Esophagus muscularis mucosa (tissue), 4 donors: ENCODE measurements at regions of chr1 and their contacts with region 1.

Region 1: DNA sequence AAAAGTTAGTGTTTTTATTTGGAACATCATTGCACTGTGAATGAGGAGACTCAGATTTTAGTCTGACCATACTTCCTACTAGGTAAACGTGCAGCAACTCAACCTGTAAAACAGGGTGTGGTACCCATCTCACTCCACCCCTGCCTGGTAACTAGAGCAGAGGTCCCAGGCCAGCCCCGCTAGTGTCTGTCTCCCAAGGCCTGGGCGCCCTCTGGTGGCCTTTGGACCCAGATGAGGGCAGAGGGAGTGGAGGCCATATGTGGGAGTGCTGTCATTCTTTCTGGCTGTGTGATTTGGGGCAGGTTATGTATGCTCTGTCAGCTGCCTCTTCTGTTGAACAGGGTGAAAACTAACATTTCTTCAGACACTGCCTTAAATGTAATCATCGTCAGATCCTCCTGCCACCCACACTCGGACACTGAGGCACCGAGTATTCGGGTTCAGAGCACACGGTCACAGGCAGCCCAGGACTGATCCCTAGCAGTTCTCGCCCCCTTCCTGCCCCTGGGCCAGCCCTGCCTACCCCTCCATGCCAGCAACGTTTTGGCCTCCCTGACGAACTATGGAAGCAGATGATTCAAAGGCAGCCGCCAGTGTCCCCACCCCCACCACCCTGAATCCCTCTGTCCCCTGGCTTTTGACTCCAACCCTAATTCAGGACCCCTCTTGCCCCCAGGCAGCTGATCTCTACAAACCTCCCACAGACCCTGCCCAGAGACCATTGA is 76.0 kb downstream of the CD247 start:
- DNase-seq: no peak
- H3K4me3 ChIP-seq: no peak overlapping the region
- H3K27ac ChIP-seq: no peak overlapping the region
- H3K4me1 ChIP-seq: peaks cover 7 to 13% (median 10%) of the 10 kb centered on the region in 4 donors
- H3K27me3 ChIP-seq: peaks cover 0 to 24% (median 4%) of the 10 kb centered on the region in 4 donors
- CTCF ChIP-seq: peak; percentile 79 to 91 (median 79)
- EP300 ChIP-seq: no peak
- POLR2A ChIP-seq: no peak

Region 2: DNA sequence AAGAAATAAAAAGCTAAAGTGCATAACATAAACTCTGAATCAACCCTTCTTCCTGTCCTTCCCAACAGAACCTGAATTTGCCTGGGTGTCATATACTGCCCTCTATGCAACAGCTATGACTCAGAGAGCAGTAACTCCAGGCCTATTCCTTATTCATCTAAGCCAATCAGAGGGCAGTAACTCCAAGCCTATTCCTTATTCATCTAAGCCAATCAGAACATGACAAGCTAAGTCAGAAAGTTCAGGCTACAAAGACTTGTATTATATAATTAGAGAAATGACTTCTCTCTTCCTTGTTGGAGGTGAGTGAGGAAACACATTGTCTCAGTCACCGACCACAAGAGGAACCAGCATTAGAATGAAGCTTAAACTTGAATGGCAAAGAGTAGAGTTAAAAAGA is 540.0 kb before region 1 on chr1:
- intact Hi-C with region 1: loop called (anchors 10 kb)
- DNase-seq: no peak
- H3K4me3 ChIP-seq: no peak overlapping the region
- H3K27ac ChIP-seq: no peak overlapping the region
- H3K4me1 ChIP-seq: peaks cover 0 to 8% (median 2%) of the 10 kb centered on the region in 4 donors
- H3K27me3 ChIP-seq: no peaks in the 10 kb centered on the region
- CTCF ChIP-seq: no peak
- EP300 ChIP-seq: no peak
- POLR2A ChIP-seq: no peak

Region 3: DNA sequence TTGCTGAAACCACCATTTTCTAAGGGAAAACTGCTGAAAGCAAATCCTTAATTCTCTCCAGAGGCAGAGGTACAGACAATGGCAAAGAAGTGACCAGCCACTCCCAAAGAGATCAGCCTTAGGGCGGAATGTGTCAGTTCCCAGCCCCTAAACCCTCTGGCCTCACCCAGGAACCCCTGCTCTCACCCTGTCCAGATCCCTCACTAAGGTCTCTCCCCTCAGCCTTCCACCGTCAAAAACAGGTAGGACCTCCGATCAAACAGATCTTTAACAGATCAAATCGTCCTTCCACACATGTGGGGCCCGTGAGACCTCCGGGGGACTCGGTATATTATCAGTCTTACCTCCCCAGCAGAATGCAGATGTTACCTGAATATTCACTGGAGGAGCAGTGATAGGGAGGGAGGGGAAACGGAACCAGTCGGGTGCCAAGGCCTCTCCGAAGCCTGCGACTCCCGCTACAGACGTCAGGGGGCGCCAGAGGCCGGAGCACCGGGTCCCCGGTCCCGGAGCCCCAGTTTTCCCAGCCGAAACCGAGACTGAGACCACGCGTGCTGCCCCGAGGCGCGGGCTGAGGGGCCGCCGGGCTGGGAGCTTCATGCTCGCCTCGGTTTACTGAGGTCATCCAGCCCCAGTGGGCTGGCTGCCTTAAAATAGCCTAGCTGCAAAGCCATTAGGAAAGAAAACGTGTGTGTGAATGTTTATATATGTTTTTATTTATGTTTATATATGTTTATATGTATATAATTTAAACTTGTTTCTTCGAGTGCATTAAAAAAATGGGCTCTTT is 375.8 kb before region 1 on chr1:
- intact Hi-C with region 1: loop called (anchors 2 kb)
- DNase-seq: no peak
- H3K4me3 ChIP-seq: peak overlapping the region; percentile 33 to 51 (median 36)
- H3K27ac ChIP-seq: no peak overlapping the region
- H3K4me1 ChIP-seq: peaks cover 6 to 8% (median 7%) of the 10 kb centered on the region in 4 donors
- H3K27me3 ChIP-seq: no peaks in the 10 kb centered on the region
- CTCF ChIP-seq: peak; percentile 89 to 100 (median 92)
- EP300 ChIP-seq: no peak
- POLR2A ChIP-seq: no peak

Region 4: DNA sequence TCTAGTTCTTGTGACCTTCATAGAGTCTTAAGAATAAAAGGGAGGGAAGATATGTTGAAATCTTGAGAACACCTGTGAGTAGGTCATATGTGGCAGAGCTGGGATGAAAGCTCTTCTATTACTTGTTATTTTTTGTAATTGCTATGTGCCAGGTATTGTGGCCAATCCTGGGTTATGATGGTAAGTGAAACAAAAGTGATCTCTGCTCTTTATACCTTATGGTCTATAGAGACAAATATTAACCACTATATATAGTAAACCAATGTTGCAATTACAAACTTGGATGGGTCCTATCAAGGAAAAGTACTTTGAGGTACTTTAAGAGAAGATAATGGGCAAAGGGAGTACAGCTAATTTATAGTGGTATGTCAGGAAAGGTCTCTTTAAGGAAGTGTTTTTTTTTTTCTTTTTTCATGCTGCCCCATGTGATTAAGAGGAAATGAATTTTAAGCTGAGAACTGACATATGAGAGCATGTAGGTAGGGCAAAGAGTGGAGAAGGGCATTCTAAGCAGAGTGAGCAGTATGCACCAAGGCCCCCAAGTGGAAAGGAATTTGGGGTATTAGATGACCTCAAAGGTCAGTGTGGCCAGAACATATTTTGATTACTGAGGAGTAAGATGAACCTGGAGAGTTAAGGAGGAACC is 178.3 kb before region 1 on chr1:
- intact Hi-C with region 1: loop called (anchors 5 kb)
- DNase-seq: no peak
- H3K4me3 ChIP-seq: no peak overlapping the region
- H3K27ac ChIP-seq: no peak overlapping the region
- H3K4me1 ChIP-seq: peaks cover 32 to 61% (median 41%) of the 10 kb centered on the region in 4 donors
- H3K27me3 ChIP-seq: no peaks in the 10 kb centered on the region
- CTCF ChIP-seq: no peak
- EP300 ChIP-seq: no peak
- POLR2A ChIP-seq: no peak